ENCODE measurements at regions of chr1 and their contacts with region 1.

Region 1: GRCh38 chr1:214637722-214638458 is 34.9 kb downstream of the CENPF start:
- DNase-seq: no peak
- ATAC-seq: peak; percentile 72
- H3K4me3 ChIP-seq: no peak overlapping the region
- H3K27ac ChIP-seq: no peak overlapping the region
- H3K4me1 ChIP-seq: no peaks in the 10 kb centered on the region
- H3K27me3 ChIP-seq: no peaks in the 10 kb centered on the region
- CTCF ChIP-seq: peak; percentile 52 to 63 (median 56)
- EP300 ChIP-seq: no peak
- POLR2A ChIP-seq: no peak
- RAD21 ChIP-seq: peak; percentile 57

Region 2: DNA sequence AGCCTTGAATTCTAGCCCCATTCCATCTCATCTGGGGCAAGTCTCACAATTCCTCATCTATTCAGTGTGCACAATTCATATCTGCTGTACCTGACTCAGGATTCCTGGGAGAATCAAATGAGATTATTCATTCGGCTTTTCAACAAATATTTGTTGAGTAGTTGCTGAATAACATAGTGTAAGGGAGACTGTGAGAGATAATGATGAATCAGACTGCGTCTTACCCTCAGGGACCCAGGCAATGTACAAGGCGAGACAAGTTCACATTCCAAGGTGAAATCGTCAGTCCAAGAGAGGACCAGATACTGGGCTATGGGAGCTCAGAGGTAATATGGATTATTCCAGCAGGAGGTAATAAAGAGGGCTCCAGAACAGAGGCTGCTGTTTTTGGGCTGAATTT is 424.8 kb before region 1 on chr1:
- CTCF ChIA-PET with region 1: interaction called, 17 read pairs
- POLR2A ChIA-PET with region 1: no interaction called
- RAD21 ChIA-PET with region 1: no interaction called
- SMC1A ChIA-PET with region 1: no interaction called
- in situ Hi-C with region 1: no loop called
- intact Hi-C with region 1: loop called (anchors 5 kb)
- DNase-seq: no peak
- ATAC-seq: no peak
- H3K4me3 ChIP-seq: no peak overlapping the region
- H3K27ac ChIP-seq: no peak overlapping the region
- H3K4me1 ChIP-seq: no peaks in the 10 kb centered on the region
- H3K27me3 ChIP-seq: no peaks in the 10 kb centered on the region; a peak in 1 of 4 replicates
- CTCF ChIP-seq: no peak
- EP300 ChIP-seq: no peak
- POLR2A ChIP-seq: no peak
- RAD21 ChIP-seq: no peak

Region 3: DNA sequence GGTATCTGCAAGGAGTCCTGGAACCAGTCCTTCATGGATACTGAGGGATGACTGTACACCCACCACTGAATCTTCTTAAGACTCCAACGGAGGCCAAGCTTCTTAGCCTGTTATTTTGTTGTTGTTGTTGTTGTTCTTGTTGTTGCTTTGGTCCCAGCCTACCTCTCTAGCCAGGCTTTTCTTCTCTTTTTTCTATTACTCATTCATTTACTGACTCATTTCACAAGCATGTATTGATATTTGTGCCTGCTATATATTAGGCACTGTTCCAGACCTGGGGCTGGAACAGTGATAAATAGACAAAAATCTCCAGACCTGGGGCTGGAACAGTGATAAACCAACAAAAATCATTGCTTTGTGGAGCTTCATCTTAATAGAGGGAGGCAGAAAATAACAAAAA is 14.5 kb before region 1 on chr1:
- CTCF ChIA-PET with region 1: interaction called, 110 read pairs
- POLR2A ChIA-PET with region 1: no interaction called
- RAD21 ChIA-PET with region 1: no interaction called
- SMC1A ChIA-PET with region 1: interaction called, 8 read pairs
- in situ Hi-C with region 1: no loop called
- intact Hi-C with region 1: no loop called
- DNase-seq: no peak
- ATAC-seq: no peak
- H3K4me3 ChIP-seq: no peak overlapping the region
- H3K27ac ChIP-seq: no peak overlapping the region
- H3K4me1 ChIP-seq: no peaks in the 10 kb centered on the region
- H3K27me3 ChIP-seq: no peaks in the 10 kb centered on the region
- CTCF ChIP-seq: no peak
- EP300 ChIP-seq: no peak
- POLR2A ChIP-seq: no peak
- RAD21 ChIP-seq: no peak

Region 4: GRCh38 chr1:214648801-214649200 is 10.9 kb after region 1 on chr1:
- CTCF ChIA-PET with region 1: interaction called, 30 read pairs
- POLR2A ChIA-PET with region 1: no interaction called
- RAD21 ChIA-PET with region 1: interaction called, 3 read pairs
- SMC1A ChIA-PET with region 1: interaction called, 5 read pairs
- in situ Hi-C with region 1: no loop called
- intact Hi-C with region 1: no loop called
- DNase-seq: no peak
- ATAC-seq: no peak
- H3K4me3 ChIP-seq: no peak overlapping the region
- H3K27ac ChIP-seq: no peak overlapping the region
- H3K4me1 ChIP-seq: no peaks in the 10 kb centered on the region
- H3K27me3 ChIP-seq: no peaks in the 10 kb centered on the region
- CTCF ChIP-seq: no peak
- EP300 ChIP-seq: no peak
- POLR2A ChIP-seq: no peak
- RAD21 ChIP-seq: no peak

Region 5: GRCh38 chr1:214791961-214792360 is 154.1 kb after region 1 on chr1:
- CTCF ChIA-PET with region 1: no interaction called
- POLR2A ChIA-PET with region 1: no interaction called
- RAD21 ChIA-PET with region 1: no interaction called
- SMC1A ChIA-PET with region 1: no interaction called
- in situ Hi-C with region 1: no loop called
- intact Hi-C with region 1: no loop called
- DNase-seq: no peak
- ATAC-seq: no peak
- H3K4me3 ChIP-seq: no peak overlapping the region
- H3K27ac ChIP-seq: no peak overlapping the region
- H3K4me1 ChIP-seq: no peaks in the 10 kb centered on the region
- H3K27me3 ChIP-seq: no peaks in the 10 kb centered on the region
- CTCF ChIP-seq: no peak
- EP300 ChIP-seq: no peak
- POLR2A ChIP-seq: no peak
- RAD21 ChIP-seq: no peak

Measured in GM12878 (cell line).